Naive thymus-derived CD4-positive, alpha-beta T cell (primary cell): ENCODE measurements at regions of chr14 and their contacts with region 1.

Region 1: GRCh38 chr14:49940808-49941421 is 48.0 kb downstream of the ARF6 start:
- DNase-seq: peak in 6 of 9 donors; percentile 25 to 63 (median 46)
- ATAC-seq: peak; percentile 64
- H3K4me3 ChIP-seq: peak overlapping the region; percentile 24
- H3K4me3 Mint-ChIP-seq: peak overlapping the region in 9 of 10 donors; percentile 18 to 72 (median 66)
- H3K27ac ChIP-seq: peak overlapping the region; percentile 39
- H3K27ac Mint-ChIP-seq: peak overlapping the region; percentile 27 to 90 (median 85)
- H3K4me1 ChIP-seq: peaks cover 31 to 36% of the 10 kb centered on the region in 2 donors
- H3K4me1 Mint-ChIP-seq: peaks cover 20 to 71% (median 59%) of the 10 kb centered on the region in 7 donors
- H3K27me3 ChIP-seq: no peaks in the 10 kb centered on the region
- H3K27me3 Mint-ChIP-seq: no peaks in the 10 kb centered on the region

Region 2: DNA sequence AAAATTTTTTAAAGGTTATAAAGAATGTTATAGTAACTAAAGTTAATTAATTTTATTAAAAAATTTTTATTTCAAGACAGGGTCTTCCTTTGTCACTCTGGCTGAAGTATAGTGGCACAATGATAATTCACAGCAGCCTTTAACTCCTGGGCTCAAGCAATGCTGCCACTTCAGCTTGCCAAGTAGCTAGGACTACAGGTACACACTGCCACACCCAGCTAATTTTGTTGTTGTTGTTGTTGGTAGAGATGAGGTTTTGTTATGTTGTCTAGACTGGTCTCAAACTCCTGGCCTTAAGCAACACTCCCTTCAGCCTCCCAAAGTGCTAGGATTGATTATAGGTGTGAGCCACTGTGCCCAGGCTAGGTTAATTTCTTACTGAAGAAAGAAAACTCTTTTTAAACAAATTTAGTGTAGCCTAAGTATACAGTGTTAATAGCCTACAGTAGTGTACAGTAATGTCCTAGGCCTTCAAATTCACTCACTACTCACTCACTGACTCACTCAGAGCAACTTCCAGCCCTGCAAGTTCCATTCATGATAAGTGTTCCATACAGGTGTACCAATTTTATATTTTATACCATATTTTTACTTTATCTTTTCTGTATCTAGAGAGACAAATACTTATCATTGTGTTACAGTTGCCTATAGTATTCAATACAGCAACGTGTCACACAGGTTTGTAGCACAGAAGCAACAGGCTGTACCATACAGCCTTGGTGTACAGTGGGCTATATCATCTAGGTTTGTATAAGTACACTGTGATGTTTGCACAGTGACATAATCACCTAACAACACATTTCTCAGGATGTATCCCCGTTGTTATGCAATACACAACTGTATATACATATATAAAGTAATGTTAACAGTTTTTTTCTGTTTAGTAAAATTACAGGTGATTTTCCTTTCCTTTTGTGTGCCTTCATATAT is 281.1 kb before region 1 on chr14:
- CTCF ChIA-PET with region 1: no interaction called
- POLR2A ChIA-PET with region 1: no interaction called
- intact Hi-C with region 1: no loop called
- DNase-seq: no peak
- ATAC-seq: no peak
- H3K4me3 ChIP-seq: no peak overlapping the region
- H3K4me3 Mint-ChIP-seq: no peak overlapping the region
- H3K27ac ChIP-seq: no peak overlapping the region
- H3K27ac Mint-ChIP-seq: no peak overlapping the region
- H3K4me1 ChIP-seq: no peaks in the 10 kb centered on the region
- H3K4me1 Mint-ChIP-seq: no peaks in the 10 kb centered on the region
- H3K27me3 ChIP-seq: no peaks in the 10 kb centered on the region
- H3K27me3 Mint-ChIP-seq: no peaks in the 10 kb centered on the region

Region 3: DNA sequence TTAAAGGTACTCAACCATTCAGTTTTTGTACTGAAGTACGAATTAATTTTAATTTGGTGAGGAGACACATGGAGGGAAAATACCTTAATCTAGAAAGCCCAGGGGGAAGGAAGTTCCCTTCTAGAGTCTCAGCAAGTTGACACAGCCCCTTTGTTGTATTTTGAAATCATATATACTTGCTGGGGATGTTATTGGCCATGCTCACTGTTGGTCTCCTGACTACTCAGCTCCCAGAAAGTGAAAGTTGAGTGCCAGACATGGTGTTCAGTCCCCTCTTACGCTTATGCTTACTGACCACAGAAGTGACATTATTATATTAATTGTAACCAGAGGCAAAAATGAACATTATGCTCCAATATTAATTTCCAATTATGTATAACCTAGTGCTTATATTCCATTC is 20.0 kb before region 1 on chr14:
- CTCF ChIA-PET with region 1: no interaction called
- POLR2A ChIA-PET with region 1: interaction called, 7 read pairs
- intact Hi-C with region 1: loop called (anchors 2 kb)
- DNase-seq: no peak
- ATAC-seq: peak; percentile 41
- H3K4me3 ChIP-seq: no peak overlapping the region
- H3K4me3 Mint-ChIP-seq: no peak overlapping the region
- H3K27ac ChIP-seq: no peak overlapping the region
- H3K27ac Mint-ChIP-seq: no peak overlapping the region
- H3K4me1 ChIP-seq: no peaks in the 10 kb centered on the region
- H3K4me1 Mint-ChIP-seq: peaks cover 0 to 20% (median 16%) of the 10 kb centered on the region in 7 donors
- H3K27me3 ChIP-seq: no peaks in the 10 kb centered on the region
- H3K27me3 Mint-ChIP-seq: no peaks in the 10 kb centered on the region

Region 4: DNA sequence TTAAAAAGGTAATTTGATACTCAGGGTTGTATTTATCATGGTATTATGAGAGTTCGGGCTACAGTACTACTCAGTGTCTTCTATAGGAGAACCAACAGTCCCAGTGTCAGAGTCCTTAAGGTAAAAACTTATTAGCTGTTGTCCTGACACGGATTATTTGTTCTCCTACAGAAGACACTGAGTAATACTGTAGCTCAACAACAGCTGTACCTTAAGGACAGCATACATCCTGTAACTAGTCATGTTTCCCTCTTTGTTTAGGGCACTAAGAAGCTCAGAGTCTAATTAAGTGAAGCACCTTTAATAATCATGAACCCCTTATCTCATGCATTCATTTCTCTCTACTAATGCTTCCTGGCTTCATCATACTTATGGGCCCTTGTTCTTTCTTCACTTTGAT is 14.1 kb before region 1 on chr14:
- CTCF ChIA-PET with region 1: no interaction called
- POLR2A ChIA-PET with region 1: interaction called, 7 read pairs
- intact Hi-C with region 1: loop called in 1 of 2 experiments (anchors 2 kb)
- DNase-seq: no peak
- ATAC-seq: no peak
- H3K4me3 ChIP-seq: no peak overlapping the region
- H3K4me3 Mint-ChIP-seq: no peak overlapping the region
- H3K27ac ChIP-seq: no peak overlapping the region
- H3K27ac Mint-ChIP-seq: no peak overlapping the region
- H3K4me1 ChIP-seq: no peaks in the 10 kb centered on the region
- H3K4me1 Mint-ChIP-seq: peaks cover 0 to 16% (median 8%) of the 10 kb centered on the region in 7 donors
- H3K27me3 ChIP-seq: no peaks in the 10 kb centered on the region
- H3K27me3 Mint-ChIP-seq: no peaks in the 10 kb centered on the region

Region 5: DNA sequence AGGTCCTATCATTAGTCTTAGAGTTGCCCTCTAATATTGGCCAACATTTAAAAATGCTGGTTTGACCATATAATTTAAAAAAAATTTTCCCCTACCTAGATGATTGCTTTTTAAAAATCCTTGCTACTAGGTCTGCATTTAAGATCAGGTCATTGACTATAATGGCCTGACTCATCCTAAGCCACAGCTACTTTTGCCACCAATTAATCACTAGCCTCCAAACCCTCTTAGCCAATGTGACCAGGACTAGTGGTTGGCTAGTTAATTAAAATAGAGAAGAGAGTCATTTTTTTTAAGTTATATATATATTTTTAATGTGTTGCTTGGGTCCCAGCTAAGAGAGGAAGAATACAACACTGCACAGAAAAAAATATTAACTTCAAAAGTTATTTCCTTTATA is 233.0 kb after region 1 on chr14:
- CTCF ChIA-PET with region 1: no interaction called
- POLR2A ChIA-PET with region 1: no interaction called
- intact Hi-C with region 1: no loop called
- DNase-seq: no peak
- ATAC-seq: no peak
- H3K4me3 ChIP-seq: no peak overlapping the region
- H3K4me3 Mint-ChIP-seq: no peak overlapping the region
- H3K27ac ChIP-seq: no peak overlapping the region
- H3K27ac Mint-ChIP-seq: no peak overlapping the region
- H3K4me1 ChIP-seq: no peaks in the 10 kb centered on the region
- H3K4me1 Mint-ChIP-seq: no peaks in the 10 kb centered on the region
- H3K27me3 ChIP-seq: no peaks in the 10 kb centered on the region
- H3K27me3 Mint-ChIP-seq: no peaks in the 10 kb centered on the region

Region 6: GRCh38 chr14:50371546-50371945 is 430.6 kb after region 1 on chr14:
- CTCF ChIA-PET with region 1: no interaction called
- POLR2A ChIA-PET with region 1: no interaction called
- intact Hi-C with region 1: no loop called
- DNase-seq: no peak
- ATAC-seq: no peak
- H3K4me3 ChIP-seq: no peak overlapping the region
- H3K4me3 Mint-ChIP-seq: no peak overlapping the region
- H3K27ac ChIP-seq: no peak overlapping the region
- H3K27ac Mint-ChIP-seq: no peak overlapping the region
- H3K4me1 ChIP-seq: no peaks in the 10 kb centered on the region
- H3K4me1 Mint-ChIP-seq: peaks cover 0 to 9% (median 5%) of the 10 kb centered on the region in 7 donors
- H3K27me3 ChIP-seq: no peaks in the 10 kb centered on the region
- H3K27me3 Mint-ChIP-seq: peaks cover 0 to 18% (median 0%) of the 10 kb centered on the region in 5 donors